Activated CD4-positive, alpha-beta memory T cell treated with anti-CD3 and anti-CD28 coated beads, Interleukin-2, amount 10 ng/mL, durations not matched to agents 7 days and 5 days (primary cell): ENCODE measurements at regions of chr19 and their contacts with region 1.

Region 1: DNA sequence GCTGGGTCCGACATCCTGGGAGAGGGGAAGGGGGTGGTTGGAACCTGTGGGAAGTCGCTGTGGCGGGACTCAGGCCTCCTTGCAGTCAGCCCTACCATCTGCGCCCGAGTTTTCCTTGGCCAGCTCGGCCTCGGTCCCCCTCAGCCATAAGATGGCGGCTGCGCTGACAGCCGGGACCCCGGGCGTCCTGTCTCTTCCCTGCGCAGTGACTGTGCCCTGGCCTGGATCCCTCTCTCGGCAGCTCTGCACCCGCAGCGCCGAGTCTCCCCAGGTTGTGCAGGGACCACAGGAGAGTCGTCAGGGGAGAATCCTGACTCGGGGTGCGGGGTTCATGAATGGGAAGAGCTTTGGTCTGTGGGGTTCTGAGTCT is 345 bp downstream of the ZNF257 start:
- DNase-seq: peak; percentile 31
- H3K4me3 Mint-ChIP-seq: peak overlapping the region; percentile 91
- H3K27ac Mint-ChIP-seq: peak overlapping the region; percentile 85
- H3K4me1 Mint-ChIP-seq: peaks cover 5% of the 10 kb centered on the region
- H3K27me3 Mint-ChIP-seq: no peaks in the 10 kb centered on the region

Region 2: GRCh38 chr19:21767065-21767800 is 285.4 kb before region 1 on chr19 and contains the start of gene ZNF100:
- CTCF ChIA-PET with region 1: no interaction called
- POLR2A ChIA-PET with region 1: interaction called, 10 read pairs
- DNase-seq: peak; percentile 88
- H3K4me3 Mint-ChIP-seq: peak within 1 kb of the TSS; percentile 93
- H3K27ac Mint-ChIP-seq: peak within 1 kb of the TSS; percentile 80
- H3K4me1 Mint-ChIP-seq: peaks cover 18% of the 10 kb centered on the region
- H3K27me3 Mint-ChIP-seq: no peaks in the 10 kb centered on the region
- total RNA-seq, gene ZNF100: 18.9 to 19.5 TPM

Region 3: GRCh38 chr19:21851596-21852345 is 200.9 kb before region 1 on chr19:
- CTCF ChIA-PET with region 1: interaction called, 3 read pairs
- POLR2A ChIA-PET with region 1: interaction called, 17 read pairs
- DNase-seq: peak; percentile 89
- H3K4me3 Mint-ChIP-seq: peak overlapping the region; percentile 89
- H3K27ac Mint-ChIP-seq: peak overlapping the region; percentile 83
- H3K4me1 Mint-ChIP-seq: peaks cover 16% of the 10 kb centered on the region
- H3K27me3 Mint-ChIP-seq: no peaks in the 10 kb centered on the region

Region 4: GRCh38 chr19:22026687-22027086 is 25.9 kb before region 1 on chr19:
- CTCF ChIA-PET with region 1: no interaction called
- POLR2A ChIA-PET with region 1: no interaction called
- DNase-seq: no peak
- H3K4me3 Mint-ChIP-seq: no peak overlapping the region
- H3K27ac Mint-ChIP-seq: no peak overlapping the region
- H3K4me1 Mint-ChIP-seq: no peaks in the 10 kb centered on the region
- H3K27me3 Mint-ChIP-seq: no peaks in the 10 kb centered on the region